ENCODE measurements at regions of chr10 and their contacts with region 1.

Region 1: GRCh38 chr10:96642973-96643372 is 56.2 kb upstream of the TM9SF3 start:
- DNase-seq: peak; percentile 72 to 75
- ATAC-seq: peak; percentile 71 to 77 (median 74)
- H3K4me3 ChIP-seq: no peak overlapping the region
- H3K4me3 Mint-ChIP-seq: no peak overlapping the region
- H3K27ac ChIP-seq: no peak overlapping the region
- H3K27ac Mint-ChIP-seq: peak overlapping the region in 1 of 2 donors; percentile 36
- H3K4me1 ChIP-seq: peaks cover 18% of the 10 kb centered on the region
- H3K4me1 Mint-ChIP-seq: peaks cover 36 to 39% of the 10 kb centered on the region in 2 donors
- H3K27me3 ChIP-seq: no peaks in the 10 kb centered on the region
- H3K27me3 Mint-ChIP-seq: no peaks in the 10 kb centered on the region
- CTCF ChIP-seq: peak; percentile 74

Region 2: DNA sequence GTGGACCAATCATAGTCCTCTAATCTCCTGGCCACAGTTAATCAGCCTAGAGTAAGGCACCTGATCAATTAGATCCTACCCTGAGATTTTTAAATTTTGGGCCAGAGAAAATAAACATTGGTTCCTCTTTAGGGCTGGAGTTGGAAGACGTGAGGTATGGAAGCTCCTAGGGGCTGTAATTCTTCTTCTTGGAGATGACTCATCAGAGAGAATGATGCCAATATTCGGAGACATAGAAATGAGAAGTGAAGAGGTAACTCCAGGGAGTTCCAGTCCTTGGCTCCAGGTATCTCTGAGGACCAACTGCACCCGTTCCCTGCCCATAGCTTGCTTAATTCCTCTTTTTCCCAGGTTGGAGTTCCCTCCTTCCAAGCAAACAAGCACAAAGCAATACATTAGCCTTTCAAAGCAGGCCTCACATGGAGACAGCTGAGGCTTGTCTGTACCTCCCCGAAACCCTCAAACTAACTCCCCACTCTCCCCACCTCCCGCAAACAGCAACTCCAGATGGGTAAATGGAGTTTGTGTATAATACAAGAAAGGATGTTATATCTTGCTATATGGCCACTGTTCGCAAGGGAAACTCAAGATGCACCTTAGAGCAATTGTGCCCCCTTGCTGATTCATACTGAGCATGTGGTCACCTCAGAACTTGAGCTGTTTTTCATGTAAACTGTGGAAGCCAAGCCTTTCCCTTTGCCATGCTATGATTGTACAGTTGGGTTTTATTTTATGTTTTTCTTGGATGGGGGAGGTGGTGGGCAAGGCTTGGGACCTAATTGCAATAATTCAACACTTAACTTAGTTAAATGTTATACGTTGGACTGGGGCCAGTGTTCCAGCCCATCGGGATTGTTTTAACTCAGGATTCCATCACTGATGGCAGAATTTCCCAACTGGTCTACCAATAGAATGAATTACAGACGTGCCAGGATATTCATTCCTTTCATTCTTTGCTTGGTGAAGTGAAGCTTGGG is 48.1 kb after region 1 on chr10:
- intact Hi-C with region 1: loop called (anchors 1 kb)
- DNase-seq: peak in 1 of 2 donors; percentile 30
- ATAC-seq: no peak
- H3K4me3 ChIP-seq: no peak overlapping the region
- H3K4me3 Mint-ChIP-seq: peak overlapping the region; percentile 2
- H3K27ac ChIP-seq: no peak overlapping the region
- H3K27ac Mint-ChIP-seq: peak overlapping the region; percentile 56 to 98
- H3K4me1 ChIP-seq: peaks cover 61% of the 10 kb centered on the region
- H3K4me1 Mint-ChIP-seq: peaks cover 80 to 84% of the 10 kb centered on the region in 2 donors
- H3K27me3 ChIP-seq: no peaks in the 10 kb centered on the region
- H3K27me3 Mint-ChIP-seq: no peaks in the 10 kb centered on the region
- CTCF ChIP-seq: peak; percentile 13

Region 3: DNA sequence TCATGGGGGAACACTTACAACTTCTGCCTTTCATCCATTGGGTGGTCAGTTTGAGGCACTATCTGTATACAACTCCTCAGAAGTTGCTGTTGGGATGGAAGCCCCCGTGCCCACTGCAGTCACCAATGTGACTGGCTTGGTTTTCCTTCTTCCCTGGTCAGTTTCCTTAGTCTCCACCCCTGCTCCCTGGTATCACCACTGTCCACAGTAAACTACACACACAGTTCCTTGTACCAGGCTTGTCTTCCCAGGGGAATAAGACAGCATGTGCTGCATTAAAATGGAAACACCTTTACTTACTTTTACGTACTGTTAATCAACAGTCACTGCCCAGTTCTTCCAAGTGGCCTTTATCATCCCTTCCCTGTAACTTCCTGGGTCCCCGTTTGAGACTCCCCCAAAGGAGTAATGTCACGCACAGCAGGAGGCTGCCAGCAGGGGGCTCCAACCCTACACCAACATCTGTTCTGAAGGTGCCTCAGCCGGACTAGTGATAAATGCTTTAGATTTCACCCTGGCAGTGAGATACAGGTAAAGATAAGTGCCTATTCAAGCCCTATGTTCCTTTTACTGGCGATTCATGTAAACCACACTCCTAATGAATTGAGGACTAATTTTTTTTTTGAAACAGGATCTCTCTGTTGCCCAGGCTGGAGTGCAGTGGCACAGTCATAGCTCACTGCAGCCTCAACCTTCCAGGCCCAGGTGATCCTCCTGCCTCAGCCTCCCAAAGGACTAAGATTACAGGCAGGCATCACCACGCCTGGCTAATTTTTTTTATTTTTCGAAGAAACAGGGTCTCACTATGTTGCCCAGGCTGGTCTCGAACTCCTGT is 122.7 kb after region 1 on chr10:
- intact Hi-C with region 1: loop called (anchors 1 kb)
- DNase-seq: peak; percentile 73 to 85
- ATAC-seq: peak; percentile 92 to 100 (median 99)
- H3K4me3 ChIP-seq: no peak overlapping the region
- H3K4me3 Mint-ChIP-seq: no peak overlapping the region
- H3K27ac ChIP-seq: no peak overlapping the region
- H3K27ac Mint-ChIP-seq: peak overlapping the region in 1 of 2 donors; percentile 47
- H3K4me1 ChIP-seq: peaks cover 15% of the 10 kb centered on the region
- H3K4me1 Mint-ChIP-seq: peaks cover 8 to 9% of the 10 kb centered on the region in 2 donors
- H3K27me3 ChIP-seq: no peaks in the 10 kb centered on the region
- H3K27me3 Mint-ChIP-seq: no peaks in the 10 kb centered on the region
- CTCF ChIP-seq: peak; percentile 77

Region 4: GRCh38 chr10:96831867-96832720 is 189.1 kb after region 1 on chr10 and contains the start of gene LCOR:
- intact Hi-C with region 1: loop called (anchors 1 kb)
- DNase-seq: peak; percentile 82 to 92
- ATAC-seq: peak; percentile 69 to 86 (median 72)
- H3K4me3 ChIP-seq: peak within 1 kb of the TSS; percentile 73
- H3K4me3 Mint-ChIP-seq: peak within 1 kb of the TSS; percentile 98
- H3K27ac ChIP-seq: peak within 1 kb of the TSS; percentile 84
- H3K27ac Mint-ChIP-seq: peak within 1 kb of the TSS; percentile 99
- H3K4me1 ChIP-seq: peaks cover 14% of the 10 kb centered on the region
- H3K4me1 Mint-ChIP-seq: peaks cover 45% of the 10 kb centered on the region in 2 donors
- H3K27me3 ChIP-seq: no peaks in the 10 kb centered on the region
- H3K27me3 Mint-ChIP-seq: no peaks in the 10 kb centered on the region
- CTCF ChIP-seq: no peak
- total RNA-seq, gene LCOR: 68.5 to 92.4 (median 87.7) TPM

Region 5: GRCh38 chr10:97025613-97026242 is 382.8 kb after region 1 on chr10:
- intact Hi-C with region 1: loop called (anchors 2 kb)
- DNase-seq: peak; percentile 35 to 75
- ATAC-seq: peak; percentile 64 to 68 (median 66)
- H3K4me3 ChIP-seq: no peak overlapping the region
- H3K4me3 Mint-ChIP-seq: no peak overlapping the region
- H3K27ac ChIP-seq: no peak overlapping the region
- H3K27ac Mint-ChIP-seq: no peak overlapping the region
- H3K4me1 ChIP-seq: no peaks in the 10 kb centered on the region
- H3K4me1 Mint-ChIP-seq: no peaks in the 10 kb centered on the region
- H3K27me3 ChIP-seq: no peaks in the 10 kb centered on the region
- H3K27me3 Mint-ChIP-seq: peaks cover 0 to 2% of the 10 kb centered on the region in 2 donors
- CTCF ChIP-seq: peak; percentile 73

Measured in natural killer cell (primary cell).